ENCODE measurements at regions of chr22 and their contacts with region 1.

Region 1: DNA sequence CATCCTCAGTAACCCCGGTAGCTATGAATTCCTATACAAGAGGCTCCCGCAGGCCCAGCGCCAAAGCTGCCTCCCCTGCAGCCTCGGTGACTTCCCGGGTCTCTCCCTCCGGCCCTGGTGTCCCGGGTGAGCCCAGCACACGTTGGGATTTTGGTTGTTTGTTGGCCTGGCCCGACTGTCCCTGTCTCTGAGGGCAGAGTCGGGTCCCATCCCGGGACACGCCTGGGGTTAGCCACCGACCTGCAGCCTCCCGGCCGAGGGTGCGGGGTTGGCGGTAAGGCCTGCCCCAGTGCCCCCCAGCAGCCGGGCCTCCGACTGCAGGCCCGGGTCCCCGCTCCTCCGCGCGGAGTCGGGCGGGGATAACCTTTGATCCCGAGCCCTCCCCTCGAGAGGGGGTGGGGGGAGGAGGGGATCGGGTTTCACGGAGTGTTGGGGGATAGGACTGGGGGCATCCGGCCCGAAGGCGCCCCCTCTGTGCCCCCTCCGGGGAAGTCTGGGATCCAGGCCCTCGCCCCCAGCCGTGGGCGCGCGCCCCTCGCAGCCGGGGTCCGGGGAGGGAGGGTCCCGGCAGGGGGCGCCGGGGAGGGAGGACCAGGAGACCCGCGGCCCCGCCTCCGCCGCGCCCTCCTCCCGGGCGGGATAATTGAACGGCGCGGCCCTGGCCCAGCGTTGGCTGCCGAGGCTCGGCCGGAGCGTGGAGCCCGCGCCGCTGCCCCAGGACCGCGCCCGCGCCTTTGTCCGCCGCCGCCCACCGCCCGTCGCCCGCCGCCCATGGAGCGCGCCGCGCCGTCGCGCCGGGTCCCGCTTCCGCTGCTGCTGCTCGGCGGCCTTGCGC is at the start of gene FBLN1:
- DNase-seq: peak; percentile 68 to 81 (median 71)
- H3K4me3 ChIP-seq: peak within 1 kb of the TSS; percentile 60
- H3K27ac ChIP-seq: peak within 1 kb of the TSS; percentile 34 to 49
- H3K4me1 ChIP-seq: peaks cover 8% of the 10 kb centered on the region
- H3K27me3 ChIP-seq: no peaks in the 10 kb centered on the region
- CTCF ChIP-seq: peak in 1 of 3 donors; percentile 22
- EP300 ChIP-seq: no peak
- POLR2A ChIP-seq: peak; percentile 18
- total RNA-seq, gene FBLN1: 62.7 to 394 (median 189) TPM

Region 2: DNA sequence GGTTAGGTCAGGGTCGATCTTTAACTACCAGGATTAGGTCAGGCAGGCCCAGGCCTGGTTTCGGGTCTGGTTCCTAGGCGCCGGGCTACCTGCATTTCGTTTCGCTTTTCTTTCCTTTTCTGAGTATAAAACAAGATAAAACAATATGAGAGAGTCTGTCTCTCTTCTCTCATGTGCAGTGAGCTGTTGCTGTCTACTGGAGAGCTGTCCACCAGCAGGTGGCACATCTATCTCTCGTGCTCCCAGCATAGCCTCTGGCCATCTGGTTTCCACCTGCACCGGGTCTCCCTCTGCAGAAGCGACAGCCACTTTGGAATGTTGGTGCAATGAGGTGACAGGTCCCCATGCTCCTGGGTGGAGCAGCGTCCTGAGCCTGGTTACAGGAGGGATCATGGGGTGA is 61.3 kb before region 1 on chr22:
- intact Hi-C with region 1: loop called in 1 of 4 experiments (anchors 5 kb)
- DNase-seq: peak; percentile 65 to 80 (median 73)
- H3K4me3 ChIP-seq: no peak overlapping the region
- H3K27ac ChIP-seq: no peak overlapping the region
- H3K4me1 ChIP-seq: no peaks in the 10 kb centered on the region
- H3K27me3 ChIP-seq: no peaks in the 10 kb centered on the region
- CTCF ChIP-seq: peak; percentile 48 to 82 (median 76)
- EP300 ChIP-seq: no peak
- POLR2A ChIP-seq: peak; percentile 29

Region 3: DNA sequence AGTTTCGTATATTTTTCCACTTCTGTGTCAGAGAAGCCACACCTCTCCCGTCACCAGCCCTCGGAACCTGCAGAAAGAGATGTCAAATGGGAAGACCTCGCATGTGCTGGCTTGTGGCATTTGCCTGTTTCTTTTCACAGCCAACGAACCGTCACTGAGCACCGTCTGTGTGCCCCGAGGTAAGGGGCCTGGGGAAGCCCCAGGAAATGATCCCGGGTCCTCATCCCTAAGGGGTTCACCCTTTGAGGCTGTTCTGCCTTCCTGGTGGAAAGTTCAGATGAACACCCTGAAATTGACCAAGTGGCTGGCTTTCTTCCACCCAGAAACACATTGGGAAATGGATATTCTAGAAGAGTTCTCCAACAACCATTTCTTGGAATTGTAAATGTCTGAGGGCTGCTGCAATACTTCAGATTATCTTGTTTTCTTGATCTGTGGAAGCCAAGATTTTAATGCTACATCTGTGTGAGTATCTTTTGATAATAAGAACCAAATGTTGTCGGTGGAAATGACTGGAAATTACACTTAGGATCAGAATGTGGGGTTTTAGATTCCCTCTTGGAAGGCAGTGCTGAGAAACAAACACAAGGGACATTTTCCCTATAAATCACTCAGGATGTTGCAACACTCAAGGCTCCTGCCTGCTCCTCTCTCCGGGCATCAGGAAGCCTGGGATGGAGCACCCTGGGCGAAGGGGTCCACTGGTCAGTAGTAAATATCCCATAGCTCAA is 51.3 kb before region 1 on chr22:
- intact Hi-C with region 1: loop called in 1 of 4 experiments (anchors 10 kb)
- DNase-seq: peak in 1 of 5 donors; percentile 70
- H3K4me3 ChIP-seq: no peak overlapping the region
- H3K27ac ChIP-seq: peak overlapping the region in 1 of 2 donors; percentile 2
- H3K4me1 ChIP-seq: peaks cover 2% of the 10 kb centered on the region
- H3K27me3 ChIP-seq: no peaks in the 10 kb centered on the region
- CTCF ChIP-seq: peak in 1 of 3 donors; percentile 33
- EP300 ChIP-seq: peak; percentile 87
- POLR2A ChIP-seq: no peak

Measured in ovary (tissue), 10 donors.